ENCODE measurements at regions of chr9 and their contacts with region 1.

Region 1: DNA sequence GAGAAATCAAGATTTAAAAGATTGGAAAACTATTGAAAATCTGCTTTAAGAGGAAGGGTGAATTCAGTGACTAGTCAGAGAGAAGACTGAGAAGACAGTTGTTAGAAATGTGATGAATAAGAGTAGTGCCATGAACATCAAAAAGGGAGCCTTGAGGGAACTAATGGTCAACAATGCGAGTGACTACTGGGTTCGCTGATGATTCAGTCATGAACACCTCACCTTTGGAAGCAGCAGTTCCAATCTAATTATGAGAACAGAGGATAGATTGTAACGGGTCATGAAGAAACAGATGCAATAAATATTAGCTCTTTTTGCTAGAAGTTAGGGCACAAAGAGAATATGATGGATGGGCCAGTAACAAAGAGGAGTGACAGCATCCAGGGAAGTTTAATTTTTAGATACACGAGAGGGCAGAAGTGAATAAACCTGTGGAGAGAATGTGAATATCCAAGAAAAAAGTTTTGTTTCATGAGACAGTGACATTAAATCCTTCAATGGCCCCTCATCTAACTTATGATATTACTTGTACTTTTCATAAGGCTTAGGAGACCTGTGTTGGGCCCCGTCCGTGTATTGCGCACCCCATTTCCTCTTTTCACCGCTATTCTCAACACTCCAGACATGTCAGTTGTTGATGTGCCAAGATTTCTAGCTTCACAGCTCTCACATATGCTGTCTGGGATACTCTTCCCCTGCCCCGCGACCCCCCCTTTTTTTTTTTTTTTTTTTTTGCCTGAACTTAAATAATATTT is 23.5 kb upstream of the IFNE start:
- DNase-seq: no peak
- ATAC-seq: no peak
- H3K4me3 ChIP-seq: no peak overlapping the region
- H3K27ac ChIP-seq: no peak overlapping the region
- H3K4me1 ChIP-seq: no peaks in the 10 kb centered on the region
- H3K27me3 ChIP-seq: peaks cover 0 to 3% (median 0%) of the 10 kb centered on the region in 3 donors
- CTCF ChIP-seq: no peak

Region 2: DNA sequence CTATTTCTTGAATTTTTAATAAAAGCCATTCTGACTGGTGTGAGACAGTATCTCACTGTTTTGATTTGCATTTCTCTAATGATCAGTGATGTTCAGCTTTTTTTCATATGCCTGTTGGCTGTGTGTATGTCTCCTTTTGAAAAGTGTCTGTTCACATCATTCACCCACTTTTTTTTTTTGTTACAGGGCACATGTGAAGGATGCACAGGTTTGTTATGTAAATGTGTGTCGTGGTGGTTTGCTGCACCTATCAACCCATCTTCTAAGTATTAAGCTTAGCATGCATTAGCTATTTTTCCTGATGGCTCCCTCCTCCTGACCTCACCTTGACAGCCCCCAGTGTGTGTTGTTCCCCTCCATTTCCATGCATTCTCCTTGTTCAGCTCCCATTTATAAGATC is 15.8 kb after region 1 on chr9:
- intact Hi-C with region 1: loop called in 1 of 2 experiments (anchors 1 kb)
- DNase-seq: no peak
- ATAC-seq: no peak
- H3K4me3 ChIP-seq: no peak overlapping the region
- H3K27ac ChIP-seq: no peak overlapping the region
- H3K4me1 ChIP-seq: no peaks in the 10 kb centered on the region
- H3K27me3 ChIP-seq: no peaks in the 10 kb centered on the region
- CTCF ChIP-seq: no peak

Region 3: DNA sequence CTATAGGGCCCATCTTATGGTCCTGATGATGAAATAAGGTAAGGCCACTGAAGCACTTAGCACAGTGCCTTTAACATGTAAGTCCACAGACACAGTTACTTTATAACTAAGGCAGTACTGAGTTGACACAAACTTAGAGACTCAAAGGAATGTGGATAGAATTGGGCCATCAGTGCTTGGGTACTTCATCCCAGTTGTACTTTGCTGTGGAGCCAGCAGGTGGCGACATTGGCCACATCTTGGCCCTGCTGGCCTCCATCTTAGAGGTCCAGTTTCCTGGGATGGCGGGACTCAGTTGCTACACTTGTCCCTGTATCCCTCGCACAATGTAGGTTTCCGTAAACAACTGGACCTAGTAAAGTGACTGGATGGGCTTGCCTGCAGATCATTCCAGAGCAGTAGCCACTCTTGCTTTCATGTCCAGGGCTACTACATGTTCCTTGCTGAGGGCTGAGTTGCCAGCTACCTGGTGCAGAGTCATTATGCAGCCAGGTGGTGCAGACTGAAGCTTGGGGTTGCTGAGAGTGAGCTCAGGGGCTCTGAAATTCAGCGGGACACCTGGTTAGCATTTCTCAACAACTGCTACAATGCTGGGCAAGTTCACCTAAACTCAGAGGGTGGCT is 307.5 kb after region 1 on chr9:
- intact Hi-C with region 1: no loop called
- DNase-seq: peak; percentile 65 to 80
- ATAC-seq: peak; percentile 84 to 92 (median 85)
- H3K4me3 ChIP-seq: no peak overlapping the region
- H3K27ac ChIP-seq: no peak overlapping the region
- H3K4me1 ChIP-seq: no peaks in the 10 kb centered on the region
- H3K27me3 ChIP-seq: no peaks in the 10 kb centered on the region
- CTCF ChIP-seq: peak; percentile 90

Measured in psoas muscle (tissue), 8 donors.